GM10248 (cell line): ENCODE measurements at regions of chr14 and their contacts with region 1.

Region 1: DNA sequence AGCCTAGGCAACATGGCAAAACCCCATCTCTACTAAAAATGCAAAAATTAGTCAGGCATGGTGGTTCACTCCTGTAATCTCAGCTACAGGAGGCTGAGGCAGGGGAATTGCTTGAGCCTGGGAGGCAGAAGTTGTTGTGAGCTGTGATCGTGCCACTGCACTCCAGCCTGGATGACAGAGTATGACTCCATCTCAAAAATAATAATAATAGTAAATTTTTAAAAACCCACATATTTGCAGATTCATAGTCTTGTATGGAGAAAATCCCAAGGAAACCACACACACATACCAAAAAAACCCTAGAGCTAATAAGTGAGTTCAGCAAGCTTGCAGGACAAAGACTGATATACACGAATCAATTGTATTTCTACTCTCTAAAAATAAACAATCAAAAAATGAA is 19.0 kb upstream of the MTHFD1 start:
- DNase-seq: no peak
- CTCF ChIP-seq: no peak

Region 2: DNA sequence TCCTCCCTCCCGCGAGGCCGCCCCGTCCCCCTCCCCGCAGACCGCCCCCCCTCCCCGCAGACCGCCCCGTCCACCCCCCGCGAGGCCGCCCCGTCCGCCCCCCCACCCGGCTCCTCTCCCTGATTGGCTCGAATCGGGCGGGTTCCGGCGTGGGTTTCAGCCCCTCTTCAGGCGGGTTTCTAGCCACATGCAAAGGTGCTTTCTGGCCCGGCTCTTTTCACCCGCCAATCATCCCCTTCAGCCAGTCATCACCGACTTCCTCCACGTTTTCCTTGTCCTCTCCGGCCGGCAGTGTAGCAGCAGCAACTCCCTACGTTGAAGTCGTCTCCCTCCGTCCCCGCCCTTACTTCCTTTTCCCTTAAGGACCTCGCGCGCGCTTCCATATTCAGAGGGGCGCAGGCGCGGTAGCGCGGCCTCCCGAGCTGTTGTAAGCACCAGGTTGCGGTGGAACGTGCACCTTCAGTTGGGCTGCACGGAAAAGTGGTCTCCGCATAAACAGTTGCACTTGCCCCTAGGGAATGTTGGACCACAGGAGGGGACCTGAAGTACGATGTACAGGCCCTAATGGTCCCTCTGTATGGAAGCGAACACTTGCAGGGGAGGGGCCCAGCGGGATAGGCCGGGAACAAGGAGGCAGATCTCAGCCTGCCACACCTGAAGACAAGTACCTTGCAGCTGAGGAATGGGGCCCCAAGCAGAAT is 30.4 kb before region 1 on chr14:
- CTCF ChIA-PET with region 1: interaction called, 11 read pairs
- POLR2A ChIA-PET with region 1: no interaction called
- DNase-seq: peak; percentile 97
- CTCF ChIP-seq: no peak